ENCODE measurements at regions of chr6 and their contacts with region 1.

Region 1: DNA sequence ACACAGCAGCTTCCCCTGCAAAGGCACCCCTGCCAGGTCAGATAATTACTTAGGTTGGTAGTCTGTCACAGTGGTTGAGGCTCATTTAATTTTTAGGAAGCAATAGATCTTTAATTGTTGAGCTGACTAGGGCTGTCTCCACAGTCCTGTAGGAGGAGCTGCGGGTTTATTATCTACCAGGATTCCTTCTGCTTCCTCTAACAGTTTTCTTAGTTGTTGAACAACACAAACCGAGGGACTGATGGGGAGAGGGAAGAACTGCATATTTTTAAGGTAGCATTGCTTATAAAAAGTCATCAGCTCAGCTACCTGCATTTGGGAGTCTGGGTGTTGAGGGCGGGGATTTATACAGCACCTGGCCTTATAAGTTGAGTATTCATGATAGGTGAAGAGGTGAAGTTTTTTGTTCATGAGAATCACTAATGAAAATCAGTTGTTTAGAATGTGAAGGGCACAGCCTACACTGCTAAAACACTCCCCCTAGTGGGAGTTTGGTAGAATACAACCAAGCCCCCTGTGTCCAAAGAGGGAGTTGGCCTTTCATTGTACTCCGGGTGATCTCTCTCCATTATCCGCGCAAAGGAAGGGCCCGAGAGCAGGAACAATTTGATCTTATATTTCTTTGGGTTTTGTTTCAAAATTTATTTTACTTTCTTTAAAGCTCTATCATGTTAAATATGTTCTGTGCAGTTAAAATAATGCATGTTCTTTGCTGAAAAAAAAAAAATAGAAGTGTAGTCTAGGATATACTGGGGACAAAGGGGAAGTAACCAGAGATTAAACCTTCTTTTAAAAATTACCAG is 69.6 kb downstream of the SSR1 start:
- DNase-seq: peak in 2 of 10 donors; percentile 28 to 45
- H3K4me3 ChIP-seq: no peak overlapping the region
- H3K27ac ChIP-seq: peak overlapping the region in 11 of 59 donors; percentile 2 to 52 (median 23)
- H3K27me3 ChIP-seq: no peaks in the 10 kb centered on the region
- CTCF ChIP-seq: peak; percentile 82 to 98 (median 91)

Region 2: GRCh38 chr6:6676910-6677441 is 566.4 kb before region 1 on chr6:
- intact Hi-C with region 1: loop called (anchors 2 to 10 kb)
- DNase-seq: peak; percentile 60 to 90 (median 74)
- H3K4me3 ChIP-seq: peak overlapping the region in 2 of 59 donors; percentile 27 to 28
- H3K27ac ChIP-seq: peak overlapping the region in 3 of 59 donors; percentile 16 to 36 (median 16)
- H3K27me3 ChIP-seq: no peaks in the 10 kb centered on the region
- CTCF ChIP-seq: peak; percentile 93 to 99 (median 98)

Region 3: GRCh38 chr6:6686748-6687601 is 556.4 kb before region 1 on chr6:
- intact Hi-C with region 1: loop called in 1 of 2 experiments (anchors 10 kb)
- DNase-seq: peak in 2 of 10 donors; percentile 53 to 80
- H3K4me3 ChIP-seq: peak overlapping the region in 4 of 59 donors; percentile 13 to 26 (median 21)
- H3K27ac ChIP-seq: peak overlapping the region in 3 of 59 donors; percentile 4 to 65 (median 51)
- H3K27me3 ChIP-seq: peaks cover 0 to 7% (median 0%) of the 10 kb centered on the region in 45 donors
- CTCF ChIP-seq: no peak

Region 4: GRCh38 chr6:6724539-6725467 is 518.6 kb before region 1 on chr6:
- intact Hi-C with region 1: loop called (anchors 2 kb)
- DNase-seq: peak in 7 of 10 donors; percentile 14 to 70 (median 63)
- H3K4me3 ChIP-seq: peak overlapping the region; percentile 15 to 67 (median 52)
- H3K27ac ChIP-seq: peak overlapping the region in 55 of 59 donors; percentile 23 to 88 (median 72)
- H3K27me3 ChIP-seq: peaks cover 0 to 8% (median 0%) of the 10 kb centered on the region in 45 donors
- CTCF ChIP-seq: peak; percentile 15 to 84 (median 68)

Region 5: DNA sequence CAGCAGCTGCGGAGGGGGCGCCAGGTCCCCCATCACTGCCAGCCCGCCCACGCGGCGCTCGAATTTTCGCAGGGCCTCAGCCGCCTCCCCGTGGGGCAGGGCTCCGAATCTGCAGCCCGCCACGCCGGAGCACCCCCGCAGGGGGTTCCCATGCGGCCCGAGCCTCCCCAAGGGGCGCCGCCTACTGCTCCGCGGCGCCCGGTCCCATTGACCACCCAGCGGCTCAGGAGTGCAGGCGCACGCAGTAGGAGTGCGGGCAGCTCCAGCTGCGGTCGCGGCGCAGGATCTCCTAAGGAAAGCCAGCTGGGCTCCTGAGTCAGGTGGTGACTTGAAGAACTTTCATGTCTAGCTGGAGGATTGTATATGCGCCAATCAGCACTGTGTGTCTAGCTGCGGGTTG is 290.9 kb before region 1 on chr6:
- intact Hi-C with region 1: no loop called
- DNase-seq: no peak
- H3K4me3 ChIP-seq: no peak overlapping the region
- H3K27ac ChIP-seq: no peak overlapping the region
- H3K27me3 ChIP-seq: no peaks in the 10 kb centered on the region
- CTCF ChIP-seq: no peak

Region 6: GRCh38 chr6:7107578-7108195 is 135.7 kb before region 1 on chr6 and contains the start of gene RREB1:
- intact Hi-C with region 1: loop called in 1 of 2 experiments (anchors 10 kb)
- DNase-seq: no peak
- H3K4me3 ChIP-seq: peak within 1 kb of the TSS; percentile 54 to 87 (median 73)
- H3K27ac ChIP-seq: peak within 1 kb of the TSS in 53 of 59 donors; percentile 25 to 89 (median 69)
- H3K27me3 ChIP-seq: peaks cover 0 to 51% (median 14%) of the 10 kb centered on the region in 45 donors
- CTCF ChIP-seq: no peak
- total RNA-seq, gene RREB1: 3.4 to 21.0 (median 7.6) TPM

Region 7: GRCh38 chr6:7292596-7293255 is 49.3 kb after region 1 on chr6:
- intact Hi-C with region 1: no loop called
- DNase-seq: no peak
- H3K4me3 ChIP-seq: no peak overlapping the region
- H3K27ac ChIP-seq: no peak overlapping the region
- H3K27me3 ChIP-seq: no peaks in the 10 kb centered on the region
- CTCF ChIP-seq: no peak